ENCODE measurements at regions of chr1 and their contacts with region 1.

Region 1: DNA sequence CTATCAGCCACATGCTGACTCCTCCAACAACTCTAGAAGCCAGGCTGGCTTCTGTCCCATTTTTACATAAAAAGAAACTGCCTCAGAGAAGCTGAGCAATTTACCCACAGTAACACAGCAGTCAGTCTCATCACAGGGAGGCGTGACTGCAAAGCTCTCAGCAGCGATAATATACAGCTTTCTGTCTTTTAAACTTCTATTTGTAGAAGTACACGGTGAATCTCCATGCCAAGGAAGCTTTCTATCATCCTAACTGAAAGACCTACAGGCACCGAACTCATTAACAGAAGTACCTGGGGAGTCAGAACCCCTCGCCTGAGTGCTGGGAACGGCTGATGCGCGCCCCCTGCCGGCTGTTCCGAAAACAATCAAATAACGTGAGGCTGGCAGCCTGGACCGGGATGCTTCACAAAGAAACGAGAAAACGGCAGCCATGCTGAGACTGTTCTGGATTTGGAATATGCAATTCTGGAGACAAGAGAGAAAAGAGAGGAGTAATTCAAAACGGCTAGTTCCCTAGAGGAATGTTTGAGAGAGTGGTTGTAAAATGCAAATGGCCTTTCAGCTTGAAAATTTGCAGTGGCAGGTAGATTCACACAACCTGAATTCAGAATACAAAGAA is 43.5 kb upstream of the RAB4A start:
- DNase-seq: peak; percentile 84 to 86
- H3K4me3 ChIP-seq: no peak overlapping the region
- H3K27ac ChIP-seq: no peak overlapping the region
- H3K4me1 ChIP-seq: peaks cover 0 to 14% of the 10 kb centered on the region in 2 donors
- H3K27me3 ChIP-seq: no peaks in the 10 kb centered on the region
- CTCF ChIP-seq: peak; percentile 82 to 89 (median 84)
- POLR2A ChIP-seq: no peak

Region 2: GRCh38 chr1:228734881-228735801 is 492.3 kb before region 1 on chr1 and contains the start of gene RHOU:
- intact Hi-C with region 1: loop called (anchors 5 kb)
- DNase-seq: peak; percentile 66 to 82
- H3K4me3 ChIP-seq: peak within 1 kb of the TSS; percentile 55 to 99
- H3K27ac ChIP-seq: peak within 1 kb of the TSS; percentile 85 to 95
- H3K4me1 ChIP-seq: peaks cover 0 to 6% of the 10 kb centered on the region in 2 donors
- H3K27me3 ChIP-seq: no peaks in the 10 kb centered on the region
- CTCF ChIP-seq: peak; percentile 53 to 98 (median 94)
- POLR2A ChIP-seq: peak; percentile 50 to 83
- total RNA-seq, gene RHOU: 13.1 to 41.2 (median 26.6) TPM